Activated B cell treated with CpG ODN at 0.5 μM for 24 hours (primary cell): ENCODE measurements at regions of chr3 and their contacts with region 1.

Region 1: GRCh38 chr3:114152519-114153151 is 26.2 kb downstream of the DRD3 start:
- DNase-seq: peak; percentile 78
- ATAC-seq: peak; percentile 98
- H3K4me3 Mint-ChIP-seq: peak overlapping the region; percentile 68
- H3K27ac Mint-ChIP-seq: peak overlapping the region; percentile 47
- H3K4me1 Mint-ChIP-seq: peaks cover 11% of the 10 kb centered on the region
- H3K27me3 Mint-ChIP-seq: no peaks in the 10 kb centered on the region
- CTCF ChIP-seq: peak; percentile 18

Region 2: DNA sequence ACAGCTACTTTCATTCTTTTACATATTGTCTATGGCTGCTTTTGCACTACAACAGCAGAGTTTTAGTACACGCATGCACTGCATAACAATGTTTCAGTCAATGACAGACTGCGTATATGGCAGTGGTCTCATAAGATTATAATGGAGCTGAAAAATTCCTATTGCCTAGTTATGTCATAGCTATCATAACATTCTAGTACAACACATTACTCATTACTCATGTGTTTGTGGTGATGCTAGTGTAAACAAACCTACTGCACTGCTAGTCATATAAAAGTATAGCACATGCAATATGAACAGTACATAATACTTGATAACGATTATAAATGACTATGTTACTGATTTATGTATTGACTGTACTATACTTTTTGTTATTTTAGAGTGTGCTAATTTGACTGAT is 48.2 kb before region 1 on chr3:
- CTCF ChIA-PET with region 1: no interaction called
- POLR2A ChIA-PET with region 1: interaction called, 11 read pairs
- intact Hi-C with region 1: no loop called
- DNase-seq: no peak
- ATAC-seq: no peak
- H3K4me3 Mint-ChIP-seq: no peak overlapping the region
- H3K27ac Mint-ChIP-seq: no peak overlapping the region
- H3K4me1 Mint-ChIP-seq: no peaks in the 10 kb centered on the region
- H3K27me3 Mint-ChIP-seq: peaks cover 6% of the 10 kb centered on the region
- CTCF ChIP-seq: no peak

Region 3: DNA sequence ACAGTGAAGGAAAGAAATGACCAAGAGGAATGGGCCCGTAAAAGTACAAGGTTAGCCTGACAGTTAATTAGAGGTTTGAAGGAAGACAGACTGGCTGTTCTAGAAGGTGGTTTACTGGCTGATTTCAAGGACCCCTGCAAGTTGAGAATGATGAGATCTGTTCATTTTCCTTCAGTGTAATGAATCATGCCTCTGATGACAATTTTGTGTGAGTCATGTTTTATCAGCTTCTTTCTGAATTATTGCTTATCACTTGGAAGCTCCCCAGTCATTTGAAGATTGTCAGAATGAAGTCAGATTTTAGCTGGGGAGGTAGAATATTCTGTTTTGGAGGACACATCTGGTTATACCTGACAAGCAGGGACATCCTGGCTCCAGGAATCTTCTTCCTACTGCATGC is 24.4 kb before region 1 on chr3:
- CTCF ChIA-PET with region 1: no interaction called
- POLR2A ChIA-PET with region 1: no interaction called
- intact Hi-C with region 1: no loop called
- DNase-seq: no peak
- ATAC-seq: no peak
- H3K4me3 Mint-ChIP-seq: no peak overlapping the region
- H3K27ac Mint-ChIP-seq: no peak overlapping the region
- H3K4me1 Mint-ChIP-seq: no peaks in the 10 kb centered on the region
- H3K27me3 Mint-ChIP-seq: no peaks in the 10 kb centered on the region
- CTCF ChIP-seq: no peak

Region 4: GRCh38 chr3:114336122-114336697 is 183.6 kb after region 1 on chr3:
- CTCF ChIA-PET with region 1: interaction called, 7 read pairs
- POLR2A ChIA-PET with region 1: no interaction called
- intact Hi-C with region 1: loop called (anchors 1 kb)
- DNase-seq: no peak
- ATAC-seq: no peak
- H3K4me3 Mint-ChIP-seq: no peak overlapping the region
- H3K27ac Mint-ChIP-seq: peak overlapping the region; percentile 59
- H3K4me1 Mint-ChIP-seq: peaks cover 43% of the 10 kb centered on the region
- H3K27me3 Mint-ChIP-seq: no peaks in the 10 kb centered on the region
- CTCF ChIP-seq: no peak

Region 5: GRCh38 chr3:114418724-114419543 is 266.3 kb after region 1 on chr3:
- CTCF ChIA-PET with region 1: interaction called, 76 read pairs
- POLR2A ChIA-PET with region 1: no interaction called
- intact Hi-C with region 1: loop called (anchors 1 kb)
- DNase-seq: no peak
- ATAC-seq: peak; percentile 75
- H3K4me3 Mint-ChIP-seq: peak overlapping the region; percentile 64
- H3K27ac Mint-ChIP-seq: peak overlapping the region; percentile 83
- H3K4me1 Mint-ChIP-seq: peaks cover 45% of the 10 kb centered on the region
- H3K27me3 Mint-ChIP-seq: no peaks in the 10 kb centered on the region
- CTCF ChIP-seq: peak; percentile 22

Region 6: GRCh38 chr3:115169808-115170207 is 1017.2 kb after region 1 on chr3:
- CTCF ChIA-PET with region 1: interaction called, 3 read pairs
- POLR2A ChIA-PET with region 1: no interaction called
- intact Hi-C with region 1: loop called (anchors 2 kb)
- DNase-seq: no peak
- ATAC-seq: no peak
- H3K4me3 Mint-ChIP-seq: no peak overlapping the region
- H3K27ac Mint-ChIP-seq: no peak overlapping the region
- H3K4me1 Mint-ChIP-seq: peaks cover 7% of the 10 kb centered on the region
- H3K27me3 Mint-ChIP-seq: no peaks in the 10 kb centered on the region
- CTCF ChIP-seq: no peak